PC-3 (cell line): ENCODE measurements at regions of chr7 and their contacts with region 1.

Region 1: GRCh38 chr7:140810830-140811556 is 113.7 kb downstream of the BRAF start:
- DNase-seq: peak; percentile 83
- ATAC-seq: peak; percentile 99
- H3K4me3 ChIP-seq: no peak overlapping the region
- H3K27ac ChIP-seq: no peak overlapping the region
- H3K4me1 ChIP-seq: no peaks in the 10 kb centered on the region
- H3K27me3 ChIP-seq: no peaks in the 10 kb centered on the region
- CTCF ChIP-seq: peak; percentile 76

Region 2: GRCh38 chr7:140863184-140863583 is 52.2 kb after region 1 on chr7:
- CTCF ChIA-PET with region 1: no interaction called
- POLR2A ChIA-PET with region 1: no interaction called
- intact Hi-C with region 1: loop called (anchors 5 kb)
- DNase-seq: no peak
- ATAC-seq: no peak
- H3K4me3 ChIP-seq: no peak overlapping the region
- H3K27ac ChIP-seq: no peak overlapping the region
- H3K4me1 ChIP-seq: no peaks in the 10 kb centered on the region
- H3K27me3 ChIP-seq: no peaks in the 10 kb centered on the region
- CTCF ChIP-seq: no peak

Region 3: GRCh38 chr7:140924019-140924820 is 113.2 kb after region 1 on chr7:
- CTCF ChIA-PET with region 1: interaction called, 6 read pairs
- POLR2A ChIA-PET with region 1: no interaction called
- intact Hi-C with region 1: loop called (anchors 2 kb)
- DNase-seq: peak; percentile 35
- ATAC-seq: peak; percentile 67
- H3K4me3 ChIP-seq: peak overlapping the region; percentile 93
- H3K27ac ChIP-seq: peak overlapping the region; percentile 56
- H3K4me1 ChIP-seq: peaks cover 29% of the 10 kb centered on the region
- H3K27me3 ChIP-seq: no peaks in the 10 kb centered on the region
- CTCF ChIP-seq: peak; percentile 59

Region 4: GRCh38 chr7:140945940-140946339 is 134.9 kb after region 1 on chr7:
- CTCF ChIA-PET with region 1: no interaction called
- POLR2A ChIA-PET with region 1: no interaction called
- intact Hi-C with region 1: no loop called
- DNase-seq: no peak
- ATAC-seq: no peak
- H3K4me3 ChIP-seq: no peak overlapping the region
- H3K27ac ChIP-seq: no peak overlapping the region
- H3K4me1 ChIP-seq: no peaks in the 10 kb centered on the region
- H3K27me3 ChIP-seq: no peaks in the 10 kb centered on the region
- CTCF ChIP-seq: no peak

Region 5: GRCh38 chr7:141014524-141015395 is 203.8 kb after region 1 on chr7 and contains the start of gene MRPS33:
- CTCF ChIA-PET with region 1: interaction called, 4 read pairs
- POLR2A ChIA-PET with region 1: no interaction called
- intact Hi-C with region 1: loop called (anchors 1 kb)
- DNase-seq: peak; percentile 97
- ATAC-seq: peak; percentile 97
- H3K4me3 ChIP-seq: peak within 1 kb of the TSS; percentile 79
- H3K27ac ChIP-seq: peak within 1 kb of the TSS; percentile 43
- H3K4me1 ChIP-seq: peaks cover 16% of the 10 kb centered on the region
- H3K27me3 ChIP-seq: peaks cover 16% of the 10 kb centered on the region; the same call in 1 of the 2 replicates
- CTCF ChIP-seq: peak; percentile 77
- total RNA-seq, gene MRPS33: 38.5 and 57.1 TPM in 2 replicates